A673 (cell line): ENCODE measurements at regions of chr14 and their contacts with region 1.

Region 1: GRCh38 chr14:21455911-21456667 is at the start of gene CHD8:
- DNase-seq: peak; percentile 100
- H3K4me3 ChIP-seq: peak within 1 kb of the TSS; percentile 95
- H3K27ac ChIP-seq: peak within 1 kb of the TSS; percentile 92
- H3K4me1 ChIP-seq: no peaks in the 10 kb centered on the region
- H3K27me3 ChIP-seq: no peaks in the 10 kb centered on the region
- CTCF ChIP-seq: peak; percentile 77
- total RNA-seq, gene CHD8: 122 and 128 TPM in 2 replicates

Region 2: DNA sequence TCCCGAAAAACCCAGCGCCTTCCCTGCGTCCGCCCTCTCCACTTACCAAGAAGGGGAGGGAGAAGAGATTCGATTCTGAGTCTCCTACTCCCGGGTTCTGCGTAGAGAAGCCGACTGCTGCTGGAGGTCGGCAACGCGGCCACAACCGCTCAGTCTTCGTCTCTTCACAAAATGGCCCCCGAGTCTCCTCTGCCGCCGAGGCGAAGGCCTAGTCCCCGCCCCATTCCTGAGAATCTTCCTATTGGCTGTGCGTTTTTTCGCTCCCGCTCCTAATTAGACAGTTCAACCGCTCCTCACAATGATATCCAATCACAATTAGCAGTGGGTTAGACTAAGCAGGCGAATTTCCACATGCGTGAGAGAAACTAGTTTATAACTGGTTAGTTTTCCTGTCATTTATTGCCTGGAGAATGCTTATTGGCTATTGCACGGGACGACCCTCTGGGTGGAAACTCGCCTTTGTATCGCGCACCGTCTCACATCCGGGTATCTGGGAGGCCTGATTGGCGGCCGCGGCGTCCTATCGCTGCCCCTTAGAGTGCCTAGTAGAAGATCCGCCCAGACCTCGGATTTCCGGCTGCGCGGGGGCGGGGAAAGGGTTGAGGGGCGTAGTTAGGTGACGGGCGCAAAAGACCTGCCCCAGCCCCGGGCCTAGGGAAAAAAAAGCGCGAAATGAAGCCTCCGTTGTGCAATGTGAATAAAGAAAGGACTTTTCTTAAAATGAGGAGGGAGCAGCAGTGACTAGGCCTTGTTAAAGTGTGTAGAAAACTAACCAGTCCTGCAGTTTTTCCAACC is 186.6 kb before region 1 on chr14 and contains the start of gene HNRNPC:
- CTCF ChIA-PET with region 1: no interaction called
- POLR2A ChIA-PET with region 1: no interaction called
- intact Hi-C with region 1: loop called (anchors 5 kb)
- DNase-seq: peak; percentile 100
- H3K4me3 ChIP-seq: peak within 1 kb of the TSS; percentile 68
- H3K27ac ChIP-seq: peak within 1 kb of the TSS; percentile 91
- H3K4me1 ChIP-seq: peaks cover 24% of the 10 kb centered on the region
- H3K27me3 ChIP-seq: no peaks in the 10 kb centered on the region
- CTCF ChIP-seq: no peak
- total RNA-seq, gene HNRNPC: 934 and 949 TPM in 2 replicates

Region 3: GRCh38 chr14:21367582-21368144 is 88.4 kb before region 1 on chr14:
- CTCF ChIA-PET with region 1: interaction called, 4 read pairs
- POLR2A ChIA-PET with region 1: interaction called, 14 read pairs
- intact Hi-C with region 1: no loop called
- DNase-seq: no peak
- H3K4me3 ChIP-seq: no peak overlapping the region
- H3K27ac ChIP-seq: no peak overlapping the region
- H3K4me1 ChIP-seq: peaks cover 12% of the 10 kb centered on the region
- H3K27me3 ChIP-seq: no peaks in the 10 kb centered on the region
- CTCF ChIP-seq: no peak

Region 4: DNA sequence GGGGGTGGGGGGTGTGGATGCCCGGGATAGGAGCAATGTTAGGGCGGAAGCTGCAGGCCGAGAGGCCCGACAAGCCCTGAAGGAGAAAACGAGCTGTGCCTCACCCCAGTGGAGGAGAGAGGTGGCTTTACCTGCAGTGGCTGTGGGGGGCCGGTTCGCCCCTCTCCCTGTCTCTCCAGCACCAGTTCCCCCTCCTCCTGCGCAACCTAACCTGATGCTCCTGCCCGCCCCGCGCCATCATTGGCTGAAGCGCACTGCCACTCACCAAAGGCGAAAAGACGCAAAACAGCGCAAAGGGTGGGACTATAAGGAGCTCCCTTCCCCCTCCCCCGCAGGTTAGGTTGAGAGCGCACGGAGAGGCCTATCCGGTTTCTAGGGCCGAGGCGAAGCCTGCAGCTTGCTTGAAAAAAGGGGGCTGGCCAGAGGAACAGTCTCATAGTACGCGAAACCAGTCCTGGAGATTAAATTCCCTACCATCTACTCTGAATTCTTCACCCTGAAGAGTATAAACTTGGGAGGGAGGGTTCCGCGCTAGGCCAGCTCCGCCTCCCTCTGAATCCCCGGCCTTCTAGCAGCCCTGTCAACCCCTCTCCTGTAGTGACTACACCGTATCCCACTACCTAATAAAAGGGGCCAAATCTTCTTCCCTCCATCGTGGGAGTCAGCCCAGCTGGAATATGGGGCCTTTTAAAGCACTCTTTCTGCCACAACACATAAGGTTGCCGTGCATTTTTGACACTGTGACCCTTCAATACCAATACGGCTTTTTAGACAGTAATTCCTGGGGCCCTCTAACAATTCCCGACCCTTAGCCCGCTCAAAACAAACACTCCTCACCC is 18.8 kb before region 1 on chr14:
- CTCF ChIA-PET with region 1: interaction called, 12 read pairs
- POLR2A ChIA-PET with region 1: interaction called, 3 read pairs
- intact Hi-C with region 1: loop called (anchors 1 kb)
- DNase-seq: peak; percentile 100
- H3K4me3 ChIP-seq: peak overlapping the region; percentile 88
- H3K27ac ChIP-seq: peak overlapping the region; percentile 86
- H3K4me1 ChIP-seq: peaks cover 19% of the 10 kb centered on the region
- H3K27me3 ChIP-seq: no peaks in the 10 kb centered on the region
- CTCF ChIP-seq: no peak

Region 5: GRCh38 chr14:21476925-21477681 is 21.0 kb after region 1 on chr14 and contains the starts of genes RAB2B and TOX4:
- CTCF ChIA-PET with region 1: interaction called, 13 read pairs
- POLR2A ChIA-PET with region 1: interaction called, 3 read pairs
- intact Hi-C with region 1: no loop called
- DNase-seq: peak; percentile 99
- H3K4me3 ChIP-seq: peak within 1 kb of the TSS; percentile 78
- H3K27ac ChIP-seq: peak within 1 kb of the TSS; percentile 79
- H3K4me1 ChIP-seq: peaks cover 11% of the 10 kb centered on the region
- H3K27me3 ChIP-seq: no peaks in the 10 kb centered on the region
- CTCF ChIP-seq: peak; percentile 99
- total RNA-seq, gene RAB2B: 31.9 and 37.1 TPM in 2 replicates
- total RNA-seq, gene TOX4: 84.7 and 86.8 TPM in 2 replicates

Region 6: DNA sequence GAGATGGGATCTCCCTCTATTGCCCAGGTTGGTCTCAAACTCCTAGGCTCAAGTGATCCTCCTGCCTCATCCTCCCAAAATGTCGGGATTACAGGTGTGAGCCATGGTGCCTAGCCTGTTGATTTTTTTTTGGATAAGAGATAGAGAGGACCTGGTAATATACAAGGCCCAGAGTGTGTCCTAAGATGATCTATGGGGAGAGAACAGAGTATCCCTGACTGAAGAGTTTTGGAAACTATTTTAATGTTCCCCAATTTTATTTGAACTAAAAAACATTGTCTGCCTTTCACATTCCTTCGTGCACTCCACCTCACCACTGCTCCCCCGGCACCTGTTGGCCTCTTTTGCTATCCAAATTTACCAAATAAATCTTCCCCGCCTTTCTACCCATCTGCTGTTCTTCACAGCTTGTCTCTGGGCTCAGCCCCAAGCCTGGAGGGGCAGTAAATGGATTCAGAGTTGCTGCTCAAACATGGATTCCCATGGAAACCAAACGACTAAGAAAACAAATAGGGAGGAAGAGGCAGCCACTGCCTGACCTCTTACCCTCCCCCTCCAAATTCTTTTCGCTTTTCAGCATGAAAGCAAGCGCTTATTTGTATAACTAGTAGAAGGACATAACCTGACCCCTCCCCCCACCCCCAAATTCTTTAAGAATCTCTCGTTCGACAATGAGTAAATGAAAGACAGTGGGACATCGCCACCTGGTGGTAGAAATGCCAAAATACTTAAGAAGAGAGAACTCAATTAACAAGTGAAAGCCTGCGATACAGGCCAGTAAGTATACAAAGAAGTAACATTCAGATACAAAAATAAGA is 101.2 kb after region 1 on chr14:
- CTCF ChIA-PET with region 1: interaction called, 3 read pairs
- POLR2A ChIA-PET with region 1: no interaction called
- intact Hi-C with region 1: loop called (anchors 1 kb)
- DNase-seq: peak; percentile 94
- H3K4me3 ChIP-seq: peak overlapping the region; percentile 39
- H3K27ac ChIP-seq: peak overlapping the region; percentile 17
- H3K4me1 ChIP-seq: peaks cover 6% of the 10 kb centered on the region
- H3K27me3 ChIP-seq: no peaks in the 10 kb centered on the region
- CTCF ChIP-seq: peak; percentile 79

Region 7: DNA sequence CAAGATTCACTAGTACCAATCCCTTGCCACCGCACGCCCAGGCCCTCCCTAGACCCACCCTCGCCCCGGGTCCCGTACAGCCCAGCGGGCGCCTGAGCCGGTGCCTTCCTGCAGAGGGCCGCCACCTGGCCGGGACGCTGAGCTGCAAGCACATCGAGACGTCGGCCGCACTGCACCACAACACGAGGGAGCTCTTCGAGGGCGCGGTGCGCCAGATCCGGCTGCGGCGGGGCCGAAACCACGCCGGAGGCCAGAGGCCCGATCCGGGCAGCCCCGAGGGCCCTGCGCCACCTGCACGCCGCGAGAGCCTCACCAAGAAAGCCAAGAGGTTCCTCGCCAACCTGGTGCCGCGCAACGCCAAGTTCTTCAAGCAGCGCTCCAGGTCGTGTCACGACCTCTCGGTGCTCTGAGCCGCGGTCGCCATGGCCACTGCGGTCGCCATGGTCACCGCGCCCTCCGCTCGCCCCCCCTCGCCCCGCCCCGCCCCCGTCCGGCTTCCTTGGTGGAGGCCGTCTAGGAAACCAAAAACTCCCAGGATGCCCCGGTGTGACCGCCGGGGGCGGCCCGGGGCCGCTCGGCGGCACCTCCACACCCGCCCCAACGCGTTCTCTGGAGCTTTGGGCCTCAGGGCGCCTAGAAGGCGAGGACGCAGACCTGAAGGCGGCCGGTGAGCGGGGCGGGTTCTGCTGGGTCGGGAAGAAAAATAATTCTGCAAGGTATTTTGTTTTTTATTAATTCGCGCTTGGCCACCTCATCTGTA is 1430.6 kb after region 1 on chr14:
- CTCF ChIA-PET with region 1: no interaction called
- POLR2A ChIA-PET with region 1: no interaction called
- intact Hi-C with region 1: no loop called
- DNase-seq: peak; percentile 27
- H3K4me3 ChIP-seq: peak overlapping the region; percentile 29
- H3K27ac ChIP-seq: no peak overlapping the region
- H3K4me1 ChIP-seq: no peaks in the 10 kb centered on the region
- H3K27me3 ChIP-seq: no peaks in the 10 kb centered on the region
- CTCF ChIP-seq: no peak